ENCODE measurements at regions of chr12 and their contacts with region 1.

Region 1: GRCh38 chr12:30862486-30862885 is 64.1 kb upstream of the TSPAN11 start:
- DNase-seq: peak; percentile 38 to 63
- ATAC-seq: peak in 7 of 8 donors; percentile 49 to 89 (median 70)
- H3K4me3 ChIP-seq: no peak overlapping the region
- H3K27ac ChIP-seq: no peak overlapping the region
- H3K4me1 ChIP-seq: peaks cover 0 to 8% (median 0%) of the 10 kb centered on the region in 9 donors
- H3K27me3 ChIP-seq: no peaks in the 10 kb centered on the region
- CTCF ChIP-seq: no peak

Region 2: GRCh38 chr12:30926243-30927221 is 64.0 kb after region 1 on chr12 and contains the start of gene TSPAN11:
- intact Hi-C with region 1: loop called in 1 of 10 experiments (anchors 5 kb)
- DNase-seq: peak; percentile 31 to 36
- ATAC-seq: peak; percentile 18 to 81 (median 62)
- H3K4me3 ChIP-seq: peak within 1 kb of the TSS in 9 of 10 donors; percentile 36 to 52 (median 44)
- H3K27ac ChIP-seq: peak within 1 kb of the TSS in 3 of 10 donors; percentile 25 to 50 (median 35)
- H3K4me1 ChIP-seq: peaks cover 0 to 22% (median 5%) of the 10 kb centered on the region in 9 donors
- H3K27me3 ChIP-seq: peaks cover 0 to 39% (median 28%) of the 10 kb centered on the region in 7 donors
- CTCF ChIP-seq: no peak
- total RNA-seq, gene TSPAN11: 0.60 to 2.9 (median 1.1) TPM

Region 3: GRCh38 chr12:31005944-31006361 is 143.5 kb after region 1 on chr12:
- intact Hi-C with region 1: no loop called
- DNase-seq: no peak
- ATAC-seq: peak in 3 of 8 donors; percentile 26 to 46 (median 37)
- H3K4me3 ChIP-seq: no peak overlapping the region
- H3K27ac ChIP-seq: no peak overlapping the region
- H3K4me1 ChIP-seq: no peaks in the 10 kb centered on the region
- H3K27me3 ChIP-seq: no peaks in the 10 kb centered on the region
- CTCF ChIP-seq: no peak